Activated T-helper 1 cell treated with anti-CD3 and anti-CD28 coated beads, Interleukin-12 subunit alpha, Interleukin-12 subunit beta, Interleukin-2, Interleukin-4 antibody, amounts not matched to agents 30 ng/mL and 10 ng/mL and 1 ng/mL, durations not matched to agents 14 hours and 24 hours and 36 hours (primary cell): ENCODE measurements at regions of chr3 and their contacts with region 1.

Region 1: DNA sequence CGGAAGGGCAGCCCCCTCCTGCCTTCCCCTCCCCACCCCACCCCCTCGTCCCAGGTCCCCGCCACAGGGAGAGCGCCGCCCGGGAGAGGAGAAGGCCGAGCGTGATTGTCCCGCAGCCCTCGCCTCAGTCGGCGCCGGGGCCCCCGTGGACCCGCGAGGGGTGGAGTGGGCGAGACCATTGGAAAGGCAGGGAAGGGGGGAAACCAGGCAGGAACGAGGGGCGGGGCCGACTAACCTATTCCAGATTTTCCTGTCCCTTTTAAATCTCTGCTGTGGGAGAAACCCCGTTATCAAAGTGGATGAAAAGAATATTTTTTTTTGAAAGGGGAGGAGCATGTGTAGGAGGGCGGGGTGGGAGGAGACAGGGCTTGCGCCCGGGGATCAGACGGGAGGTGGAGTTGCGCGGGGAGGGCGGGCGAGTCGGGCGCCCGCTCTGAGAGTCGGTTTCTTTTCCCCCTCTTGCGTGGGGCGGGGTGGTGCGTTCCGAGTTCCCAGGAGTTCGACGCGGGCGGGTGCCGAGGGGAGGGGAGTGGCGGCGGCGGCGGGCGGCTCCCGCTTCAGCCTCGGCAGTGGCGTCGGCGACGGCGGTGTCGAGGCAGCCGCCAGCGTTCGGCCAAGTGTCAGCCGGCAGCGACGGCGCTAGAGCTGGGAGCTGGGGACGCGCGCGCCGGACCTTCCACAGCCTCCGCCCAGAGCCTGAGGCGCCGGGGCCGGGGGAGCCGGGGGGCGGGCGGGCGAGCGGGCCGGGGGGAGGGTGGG is at the start of gene NECTIN3:
- DNase-seq: peak; percentile 77
- H3K4me3 Mint-ChIP-seq: peak within 1 kb of the TSS; percentile 91
- H3K27ac Mint-ChIP-seq: peak within 1 kb of the TSS; percentile 90
- H3K4me1 Mint-ChIP-seq: peaks cover 28% of the 10 kb centered on the region
- H3K27me3 Mint-ChIP-seq: peaks cover 55% of the 10 kb centered on the region
- total RNA-seq, gene NECTIN3: 3.5 and 4.6 TPM in 2 replicates

Region 2: DNA sequence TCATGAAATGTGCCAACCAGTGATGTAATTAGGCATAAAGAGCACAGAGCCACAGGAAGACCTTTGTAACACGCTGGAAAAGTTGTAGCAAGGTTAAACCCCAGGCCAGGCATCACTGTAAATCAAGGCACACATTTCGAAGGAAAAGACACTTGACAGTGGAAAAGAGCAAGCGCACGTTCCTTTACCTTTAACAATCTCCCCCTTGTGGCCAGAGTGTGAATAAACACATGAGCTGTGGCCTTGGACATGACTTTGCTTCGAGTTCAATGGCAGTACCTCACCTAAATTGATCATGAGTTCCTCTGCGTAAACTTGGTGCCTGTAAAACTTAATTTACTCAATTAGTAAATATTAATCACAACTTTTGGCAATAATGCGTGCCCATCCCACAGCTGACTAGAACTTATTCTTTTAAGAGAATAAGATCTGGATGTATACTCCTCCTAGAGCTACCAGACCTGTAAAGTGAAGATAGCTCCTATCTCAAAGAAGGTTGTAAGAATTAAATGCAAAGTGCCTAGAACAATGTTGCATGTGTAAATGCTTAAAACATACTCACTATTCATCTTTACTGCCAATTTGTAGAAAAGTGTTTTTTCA is 756.8 kb before region 1 on chr3:
- intact Hi-C with region 1: loop called (anchors 10 kb)
- DNase-seq: peak; percentile 20
- H3K4me3 Mint-ChIP-seq: no peak overlapping the region
- H3K27ac Mint-ChIP-seq: no peak overlapping the region
- H3K4me1 Mint-ChIP-seq: no peaks in the 10 kb centered on the region
- H3K27me3 Mint-ChIP-seq: peaks cover 5% of the 10 kb centered on the region

Region 3: DNA sequence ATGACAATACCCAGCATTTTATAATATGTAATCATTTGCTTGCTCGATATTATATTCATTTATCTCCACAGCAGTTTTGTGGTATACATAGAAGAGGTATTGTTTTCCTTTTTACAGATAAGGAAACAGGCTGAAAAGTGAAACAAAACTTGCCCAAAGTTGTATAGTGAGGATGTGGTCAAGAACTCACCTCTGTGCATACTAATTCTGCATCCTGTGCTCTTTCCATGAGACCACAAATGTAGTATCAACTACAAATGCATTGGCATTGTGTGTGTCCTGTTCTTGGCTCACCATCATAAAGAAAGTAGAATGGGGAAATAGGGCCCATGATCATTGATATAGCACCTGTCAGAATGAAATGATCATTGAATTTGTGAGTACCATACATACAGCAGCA is 167.4 kb after region 1 on chr3:
- intact Hi-C with region 1: loop called (anchors 1 kb)
- DNase-seq: peak; percentile 48
- H3K4me3 Mint-ChIP-seq: peak overlapping the region; percentile 69
- H3K27ac Mint-ChIP-seq: peak overlapping the region; percentile 76
- H3K4me1 Mint-ChIP-seq: peaks cover 49% of the 10 kb centered on the region
- H3K27me3 Mint-ChIP-seq: no peaks in the 10 kb centered on the region

Region 4: GRCh38 chr3:111517801-111518200 is 446.4 kb after region 1 on chr3:
- intact Hi-C with region 1: no loop called
- DNase-seq: no peak
- H3K4me3 Mint-ChIP-seq: no peak overlapping the region
- H3K27ac Mint-ChIP-seq: no peak overlapping the region
- H3K4me1 Mint-ChIP-seq: no peaks in the 10 kb centered on the region
- H3K27me3 Mint-ChIP-seq: no peaks in the 10 kb centered on the region

Region 5: GRCh38 chr3:111700054-111700453 is 628.6 kb after region 1 on chr3:
- intact Hi-C with region 1: loop called (anchors 5 kb)
- DNase-seq: no peak
- H3K4me3 Mint-ChIP-seq: peak overlapping the region; percentile 44
- H3K27ac Mint-ChIP-seq: peak overlapping the region; percentile 86
- H3K4me1 Mint-ChIP-seq: peaks cover 13% of the 10 kb centered on the region
- H3K27me3 Mint-ChIP-seq: no peaks in the 10 kb centered on the region